Activated naive CD4-positive, alpha-beta T cell treated with anti-CD3 and anti-CD28 coated beads for 36 hours (primary cell): ENCODE measurements at regions of chr3 and their contacts with region 1.

Region 1: DNA sequence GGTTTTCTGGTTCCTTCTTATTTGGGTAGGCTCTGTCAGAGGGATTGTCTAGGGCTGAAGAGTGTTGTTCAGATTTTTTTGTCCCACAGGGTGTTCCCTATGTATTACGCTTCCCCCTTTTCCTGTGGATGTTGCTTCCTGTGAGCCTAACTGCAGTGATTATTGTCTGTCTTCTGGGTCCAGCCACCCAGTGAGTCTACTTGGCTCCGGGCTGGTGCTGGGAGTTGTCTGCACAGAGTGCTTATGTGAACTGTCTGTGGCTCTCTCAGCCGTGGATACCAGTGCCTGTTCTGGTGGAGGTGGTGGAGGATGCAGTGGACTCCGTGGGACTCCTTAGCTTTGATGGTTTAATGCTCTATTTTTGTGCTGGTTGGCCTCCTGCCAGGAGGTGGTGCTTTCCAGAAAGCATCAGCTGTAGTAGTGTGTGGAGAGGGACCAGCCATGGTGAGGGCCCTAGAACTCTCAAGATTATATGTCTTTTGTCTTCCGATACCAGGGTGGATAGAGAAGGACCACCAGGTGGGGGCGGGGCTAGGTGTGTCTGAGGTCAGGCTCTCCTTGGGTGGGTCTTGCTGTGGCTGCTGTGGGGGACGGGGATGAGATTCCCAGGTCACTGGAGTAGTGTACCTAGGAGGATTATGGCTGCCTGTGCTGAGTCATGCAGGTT is 53.8 kb downstream of the CCDC66 start:
- DNase-seq: no peak
- H3K4me3 Mint-ChIP-seq: no peak overlapping the region
- H3K27ac Mint-ChIP-seq: no peak overlapping the region
- H3K4me1 Mint-ChIP-seq: peaks cover 61% of the 10 kb centered on the region
- H3K27me3 Mint-ChIP-seq: no peaks in the 10 kb centered on the region

Region 2: DNA sequence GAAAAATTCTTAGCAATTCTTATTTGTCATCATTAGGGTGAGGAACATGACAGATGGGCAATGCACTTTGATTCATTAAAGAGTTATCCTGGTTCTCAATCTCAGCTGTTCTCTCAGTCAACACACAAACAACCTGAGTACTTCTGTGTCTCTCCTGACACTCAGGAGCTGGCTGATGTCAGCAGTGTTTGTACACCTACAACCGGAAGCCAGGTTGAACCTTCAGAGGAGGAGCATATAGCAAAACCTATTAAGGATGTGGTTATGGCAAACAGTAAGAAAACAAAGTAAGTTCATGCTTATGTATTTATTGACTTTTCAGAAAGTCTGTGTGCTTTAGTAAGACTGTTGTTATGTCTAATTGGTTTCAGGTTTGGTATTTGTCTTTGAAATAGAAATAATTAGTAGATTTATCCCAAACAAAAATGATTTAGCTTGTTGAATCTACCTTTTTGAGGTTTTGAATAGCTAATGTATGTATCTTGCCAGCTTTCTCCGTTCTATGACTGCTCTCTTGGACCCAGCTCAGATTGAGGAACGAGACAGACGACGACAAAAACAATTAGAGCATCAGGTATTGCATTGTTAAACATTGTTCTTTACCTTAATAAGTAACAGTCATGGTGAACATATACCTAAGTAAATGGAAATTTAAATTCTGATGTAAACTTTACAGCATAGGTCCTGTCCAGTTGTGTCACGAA is 17.2 kb before region 1 on chr3:
- CTCF ChIA-PET with region 1: interaction called, 3 read pairs
- intact Hi-C with region 1: loop called (anchors 1 kb)
- DNase-seq: peak; percentile 72
- H3K4me3 Mint-ChIP-seq: no peak overlapping the region
- H3K27ac Mint-ChIP-seq: peak overlapping the region; percentile 90
- H3K4me1 Mint-ChIP-seq: peaks cover 61% of the 10 kb centered on the region
- H3K27me3 Mint-ChIP-seq: no peaks in the 10 kb centered on the region

Region 3: DNA sequence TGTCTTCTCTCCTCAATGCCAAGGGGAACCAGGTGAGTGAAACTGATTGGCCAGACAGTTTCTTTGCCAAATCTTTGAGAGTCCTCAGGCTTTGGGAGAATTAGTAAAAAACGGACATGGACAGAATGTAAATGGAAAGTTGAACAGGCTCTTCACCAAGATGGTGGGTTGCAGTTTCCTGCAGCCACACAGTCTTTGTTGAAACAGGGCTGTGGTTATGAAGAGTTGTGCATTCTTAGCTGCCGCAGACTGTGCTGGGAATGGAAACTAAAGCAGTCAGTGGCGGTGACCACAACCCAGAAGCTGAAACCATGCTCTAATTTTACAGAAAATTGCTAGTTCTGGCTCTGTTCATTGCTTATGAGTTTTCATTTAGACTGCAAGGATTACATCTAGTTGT is 114.4 kb after region 1 on chr3:
- CTCF ChIA-PET with region 1: no interaction called
- intact Hi-C with region 1: no loop called
- DNase-seq: peak; percentile 83
- H3K4me3 Mint-ChIP-seq: peak overlapping the region; percentile 61
- H3K27ac Mint-ChIP-seq: peak overlapping the region; percentile 91
- H3K4me1 Mint-ChIP-seq: peaks cover 35% of the 10 kb centered on the region
- H3K27me3 Mint-ChIP-seq: no peaks in the 10 kb centered on the region